AG04450 (cell line): ENCODE measurements at regions of chr1 and their contacts with region 1.

Region 1: DNA sequence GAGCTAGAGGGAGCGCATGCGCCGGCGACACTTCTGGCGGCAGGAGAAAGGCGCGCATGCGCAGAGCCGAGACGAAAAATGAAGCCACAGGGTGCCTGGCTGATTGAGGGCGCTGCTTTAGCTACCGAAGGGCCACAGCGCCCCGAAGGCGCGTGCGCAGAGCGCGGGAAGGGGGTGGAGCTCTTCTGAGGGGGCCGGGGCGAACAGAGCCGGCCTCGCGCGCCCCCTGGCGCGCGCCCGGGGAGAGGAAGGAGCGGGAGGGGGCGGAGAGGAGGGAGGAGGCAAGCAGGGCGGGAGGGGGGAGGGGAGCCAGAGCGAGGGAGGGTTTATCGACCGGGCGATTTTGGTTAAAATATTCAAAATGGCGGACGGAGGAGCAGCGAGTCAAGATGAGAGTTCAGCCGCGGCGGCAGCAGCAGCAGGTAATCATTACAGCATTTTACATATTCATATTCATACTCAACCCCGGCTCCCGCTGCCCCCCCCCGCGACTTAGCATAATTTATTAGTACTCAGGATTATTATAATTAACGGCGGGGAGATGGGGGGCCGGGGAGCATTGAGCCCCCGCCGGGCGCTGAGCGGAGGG is at the start of gene POU2F1:
- DNase-seq: peak; percentile 94
- H3K4me3 ChIP-seq: peak within 1 kb of the TSS; percentile 99
- H3K27ac ChIP-seq: peak within 1 kb of the TSS; percentile 65
- H3K27me3 ChIP-seq: no peaks in the 10 kb centered on the region
- CTCF ChIP-seq: peak; percentile 59
- polyA plus RNA-seq, gene POU2F1: 2.7 and 2.8 TPM in 2 replicates

Region 2: DNA sequence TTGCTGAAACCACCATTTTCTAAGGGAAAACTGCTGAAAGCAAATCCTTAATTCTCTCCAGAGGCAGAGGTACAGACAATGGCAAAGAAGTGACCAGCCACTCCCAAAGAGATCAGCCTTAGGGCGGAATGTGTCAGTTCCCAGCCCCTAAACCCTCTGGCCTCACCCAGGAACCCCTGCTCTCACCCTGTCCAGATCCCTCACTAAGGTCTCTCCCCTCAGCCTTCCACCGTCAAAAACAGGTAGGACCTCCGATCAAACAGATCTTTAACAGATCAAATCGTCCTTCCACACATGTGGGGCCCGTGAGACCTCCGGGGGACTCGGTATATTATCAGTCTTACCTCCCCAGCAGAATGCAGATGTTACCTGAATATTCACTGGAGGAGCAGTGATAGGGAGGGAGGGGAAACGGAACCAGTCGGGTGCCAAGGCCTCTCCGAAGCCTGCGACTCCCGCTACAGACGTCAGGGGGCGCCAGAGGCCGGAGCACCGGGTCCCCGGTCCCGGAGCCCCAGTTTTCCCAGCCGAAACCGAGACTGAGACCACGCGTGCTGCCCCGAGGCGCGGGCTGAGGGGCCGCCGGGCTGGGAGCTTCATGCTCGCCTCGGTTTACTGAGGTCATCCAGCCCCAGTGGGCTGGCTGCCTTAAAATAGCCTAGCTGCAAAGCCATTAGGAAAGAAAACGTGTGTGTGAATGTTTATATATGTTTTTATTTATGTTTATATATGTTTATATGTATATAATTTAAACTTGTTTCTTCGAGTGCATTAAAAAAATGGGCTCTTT is 154.1 kb before region 1 on chr1:
- CTCF ChIA-PET with region 1: interaction called, 27 read pairs
- POLR2A ChIA-PET with region 1: no interaction called
- DNase-seq: no peak
- H3K4me3 ChIP-seq: peak overlapping the region; percentile 36; the same call in 1 of the 2 replicates
- H3K27ac ChIP-seq: no peak overlapping the region
- H3K27me3 ChIP-seq: no peaks in the 10 kb centered on the region
- CTCF ChIP-seq: peak; percentile 94

Region 3: DNA sequence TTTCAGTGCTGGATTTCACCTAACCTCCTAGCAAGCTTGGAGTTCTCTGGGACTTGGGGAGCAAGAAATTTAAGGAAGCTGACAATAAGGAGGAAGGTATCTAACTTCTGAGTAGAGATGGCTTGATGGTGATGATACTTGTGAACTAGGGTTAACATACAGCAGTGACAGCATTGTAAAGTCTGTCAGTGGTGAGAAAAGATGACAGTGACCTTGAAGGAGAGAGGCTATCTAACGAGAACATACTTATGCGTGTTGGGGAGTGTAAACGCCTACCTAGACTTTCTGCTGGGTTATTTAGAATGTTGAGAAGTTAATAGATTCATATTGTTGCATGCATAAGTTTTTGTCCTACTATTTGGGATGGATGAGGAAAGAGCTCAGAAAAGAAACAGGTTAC is 16.4 kb after region 1 on chr1:
- CTCF ChIA-PET with region 1: interaction called, 128 read pairs
- POLR2A ChIA-PET with region 1: no interaction called
- DNase-seq: no peak
- H3K4me3 ChIP-seq: no peak overlapping the region
- H3K27ac ChIP-seq: no peak overlapping the region
- H3K27me3 ChIP-seq: no peaks in the 10 kb centered on the region
- CTCF ChIP-seq: no peak

Region 4: GRCh38 chr1:167291539-167292185 is 71.0 kb after region 1 on chr1:
- CTCF ChIA-PET with region 1: interaction called, 14 read pairs
- POLR2A ChIA-PET with region 1: no interaction called
- DNase-seq: no peak
- H3K4me3 ChIP-seq: no peak overlapping the region
- H3K27ac ChIP-seq: no peak overlapping the region
- H3K27me3 ChIP-seq: no peaks in the 10 kb centered on the region
- CTCF ChIP-seq: no peak

Region 5: DNA sequence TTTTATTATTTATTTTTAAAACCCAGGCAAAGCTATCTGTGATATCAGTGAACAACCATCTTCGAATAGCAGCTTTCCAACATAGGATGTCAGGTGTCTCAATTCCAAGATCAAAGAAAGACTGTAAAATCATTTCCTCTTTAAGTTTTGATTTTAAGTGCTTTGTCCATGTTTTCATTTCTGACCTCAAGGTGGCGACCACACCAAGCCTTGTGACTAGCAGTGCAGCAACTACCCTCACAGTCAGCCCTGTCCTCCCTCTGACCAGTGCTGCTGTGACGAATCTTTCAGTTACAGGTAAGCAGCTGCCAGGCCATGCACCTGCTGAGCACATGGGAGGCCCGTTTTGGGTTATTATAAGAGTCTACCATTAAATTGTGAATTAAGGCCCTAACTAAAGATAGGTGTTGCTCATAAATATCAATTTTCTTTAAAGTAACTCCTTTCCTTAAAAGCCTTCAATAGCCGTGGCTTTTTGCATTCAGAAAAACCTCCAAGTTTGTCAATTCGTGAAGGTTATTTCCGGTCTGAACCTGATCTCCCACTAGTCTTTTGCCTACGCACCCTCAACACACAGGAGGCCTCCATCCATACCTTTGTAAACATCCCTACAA is 180.7 kb after region 1 on chr1:
- CTCF ChIA-PET with region 1: interaction called, 14 read pairs
- POLR2A ChIA-PET with region 1: no interaction called
- DNase-seq: peak; percentile 2
- H3K4me3 ChIP-seq: no peak overlapping the region
- H3K27ac ChIP-seq: no peak overlapping the region
- H3K27me3 ChIP-seq: no peaks in the 10 kb centered on the region
- CTCF ChIP-seq: peak; percentile 65

Region 6: GRCh38 chr1:167533851-167534300 is 313.2 kb after region 1 on chr1:
- CTCF ChIA-PET with region 1: interaction called, 16 read pairs
- POLR2A ChIA-PET with region 1: no interaction called
- DNase-seq: peak; percentile 18
- H3K4me3 ChIP-seq: no peak overlapping the region
- H3K27ac ChIP-seq: no peak overlapping the region
- H3K27me3 ChIP-seq: peaks cover 5% of the 10 kb centered on the region
- CTCF ChIP-seq: peak; percentile 96